ENCODE measurements at regions of chr17 and their contacts with region 1.

Region 1: DNA sequence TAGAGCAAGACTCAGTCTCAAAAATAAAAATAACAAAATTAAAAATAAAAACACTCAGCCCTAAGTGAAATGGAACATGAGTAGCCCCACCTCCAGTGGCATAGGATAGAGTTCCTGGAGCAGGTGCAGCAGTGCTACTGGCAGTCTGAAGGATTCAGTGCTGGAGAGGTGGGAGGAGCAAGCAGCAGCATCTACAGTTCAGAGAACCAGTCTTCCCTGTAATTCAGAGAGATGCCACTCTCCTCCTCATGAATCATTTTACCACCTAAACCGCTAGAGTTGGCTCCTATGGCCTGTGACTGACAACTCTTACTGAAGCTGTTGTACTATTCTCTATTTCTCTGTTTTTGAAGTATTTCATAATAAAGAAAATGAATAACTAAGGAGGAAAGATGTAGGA is 56.0 kb upstream of the SMURF2 start:
- DNase-seq: no peak
- H3K4me3 Mint-ChIP-seq: no peak overlapping the region
- H3K27ac Mint-ChIP-seq: no peak overlapping the region
- H3K4me1 Mint-ChIP-seq: peaks cover 12% of the 10 kb centered on the region
- H3K27me3 Mint-ChIP-seq: no peaks in the 10 kb centered on the region

Region 2: DNA sequence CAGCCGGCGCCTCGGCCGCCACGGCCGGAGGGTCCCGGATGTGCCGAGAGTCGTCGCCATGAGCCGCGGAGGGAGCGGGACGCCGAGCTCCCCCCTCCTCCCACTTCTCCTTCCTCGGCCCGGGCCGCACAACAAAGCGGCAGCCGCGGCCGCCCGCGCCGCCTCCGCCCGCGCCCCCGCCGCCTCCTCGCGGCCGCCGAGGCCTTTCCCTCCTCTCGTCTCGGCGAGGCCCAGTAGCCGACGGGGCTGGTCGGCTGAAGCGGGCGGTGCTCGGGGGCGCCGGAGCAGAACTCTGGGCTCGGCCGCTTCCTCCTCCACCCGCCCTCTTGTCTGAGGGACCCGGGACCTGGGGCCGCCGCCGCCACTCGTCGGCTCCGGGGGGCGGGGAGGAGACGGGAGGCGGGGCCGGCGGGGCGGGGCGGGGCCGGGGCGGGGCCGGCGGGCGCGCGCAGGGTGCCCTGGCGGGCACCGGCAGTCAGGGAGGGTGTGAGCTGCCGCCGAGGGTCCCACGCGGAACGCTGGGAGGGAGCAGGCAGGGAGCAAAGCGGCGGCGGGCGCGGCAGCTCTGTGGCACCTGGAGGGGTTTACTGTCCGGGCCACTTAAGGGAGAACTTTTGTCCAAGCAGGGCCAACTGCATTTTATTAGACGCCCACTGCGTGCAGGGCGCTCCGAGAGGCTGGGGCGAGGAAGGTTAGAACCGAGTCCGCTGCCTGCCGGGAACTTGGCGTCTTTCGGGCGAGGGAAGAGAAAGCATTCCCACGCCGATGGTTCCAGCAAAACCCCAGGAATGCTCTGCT is 55.9 kb before region 1 on chr17 and contains the start of gene SMURF2:
- CTCF ChIA-PET with region 1: no interaction called
- POLR2A ChIA-PET with region 1: no interaction called
- intact Hi-C with region 1: loop called (anchors 10 kb)
- DNase-seq: peak; percentile 84
- H3K4me3 Mint-ChIP-seq: peak within 1 kb of the TSS; percentile 95
- H3K27ac Mint-ChIP-seq: peak within 1 kb of the TSS; percentile 90
- H3K4me1 Mint-ChIP-seq: peaks cover 29% of the 10 kb centered on the region
- H3K27me3 Mint-ChIP-seq: no peaks in the 10 kb centered on the region
- total RNA-seq, gene SMURF2: 11.5 to 12.1 TPM

Region 3: GRCh38 chr17:64694207-64694606 is 23.9 kb before region 1 on chr17:
- CTCF ChIA-PET with region 1: no interaction called
- POLR2A ChIA-PET with region 1: no interaction called
- intact Hi-C with region 1: no loop called
- DNase-seq: no peak
- H3K4me3 Mint-ChIP-seq: no peak overlapping the region
- H3K27ac Mint-ChIP-seq: no peak overlapping the region
- H3K4me1 Mint-ChIP-seq: no peaks in the 10 kb centered on the region
- H3K27me3 Mint-ChIP-seq: peaks cover 2% of the 10 kb centered on the region

Region 4: GRCh38 chr17:64736804-64737492 is 18.9 kb after region 1 on chr17:
- CTCF ChIA-PET with region 1: no interaction called
- POLR2A ChIA-PET with region 1: no interaction called
- intact Hi-C with region 1: no loop called
- DNase-seq: peak; percentile 74
- H3K4me3 Mint-ChIP-seq: no peak overlapping the region
- H3K27ac Mint-ChIP-seq: no peak overlapping the region
- H3K4me1 Mint-ChIP-seq: peaks cover 6% of the 10 kb centered on the region
- H3K27me3 Mint-ChIP-seq: no peaks in the 10 kb centered on the region

Region 5: DNA sequence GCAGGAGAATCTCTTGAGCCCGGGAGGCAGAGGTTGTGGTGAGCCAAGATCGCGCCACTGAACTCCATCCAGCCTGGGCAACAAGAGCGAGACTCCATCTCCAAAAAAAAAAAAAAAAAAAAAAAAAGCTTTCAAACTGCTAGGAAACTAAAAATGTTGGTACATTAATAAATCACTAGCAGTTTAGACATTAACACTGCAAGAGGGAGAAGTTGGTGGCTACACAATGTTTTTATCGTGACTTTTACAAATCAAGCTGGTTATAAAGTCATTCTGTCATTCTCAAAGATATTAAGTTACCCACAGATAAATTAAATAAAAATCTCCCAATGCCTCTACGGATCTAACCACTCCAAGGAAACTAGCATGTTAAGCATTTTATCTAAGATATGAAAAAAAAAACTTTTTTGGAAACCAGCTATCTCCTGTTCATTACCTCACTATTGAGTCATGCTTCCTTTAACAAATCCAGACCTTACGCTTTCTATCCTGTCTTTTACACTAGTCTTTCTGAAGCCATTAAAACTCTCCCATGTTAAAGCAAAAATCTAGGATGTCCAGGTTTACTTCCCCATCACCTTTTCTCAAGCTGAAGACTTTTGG is 30.0 kb after region 1 on chr17:
- CTCF ChIA-PET with region 1: no interaction called
- POLR2A ChIA-PET with region 1: no interaction called
- intact Hi-C with region 1: no loop called
- DNase-seq: no peak
- H3K4me3 Mint-ChIP-seq: no peak overlapping the region
- H3K27ac Mint-ChIP-seq: no peak overlapping the region
- H3K4me1 Mint-ChIP-seq: no peaks in the 10 kb centered on the region
- H3K27me3 Mint-ChIP-seq: no peaks in the 10 kb centered on the region

Measured in activated CD4-positive, alpha-beta memory T cell treated with anti-CD3 and anti-CD28 coated beads for 36 hours (primary cell).